ENCODE measurements at regions of chr19 and their contacts with region 1.

Region 1: GRCh38 chr19:13099073-13099999 is 3.3 kb downstream of the LYL1 start:
- DNase-seq: no peak
- H3K4me3 ChIP-seq: no peak overlapping the region
- H3K27ac ChIP-seq: no peak overlapping the region
- H3K4me1 ChIP-seq: no peaks in the 10 kb centered on the region
- H3K27me3 ChIP-seq: no peaks in the 10 kb centered on the region
- CTCF ChIP-seq: no peak

Region 2: DNA sequence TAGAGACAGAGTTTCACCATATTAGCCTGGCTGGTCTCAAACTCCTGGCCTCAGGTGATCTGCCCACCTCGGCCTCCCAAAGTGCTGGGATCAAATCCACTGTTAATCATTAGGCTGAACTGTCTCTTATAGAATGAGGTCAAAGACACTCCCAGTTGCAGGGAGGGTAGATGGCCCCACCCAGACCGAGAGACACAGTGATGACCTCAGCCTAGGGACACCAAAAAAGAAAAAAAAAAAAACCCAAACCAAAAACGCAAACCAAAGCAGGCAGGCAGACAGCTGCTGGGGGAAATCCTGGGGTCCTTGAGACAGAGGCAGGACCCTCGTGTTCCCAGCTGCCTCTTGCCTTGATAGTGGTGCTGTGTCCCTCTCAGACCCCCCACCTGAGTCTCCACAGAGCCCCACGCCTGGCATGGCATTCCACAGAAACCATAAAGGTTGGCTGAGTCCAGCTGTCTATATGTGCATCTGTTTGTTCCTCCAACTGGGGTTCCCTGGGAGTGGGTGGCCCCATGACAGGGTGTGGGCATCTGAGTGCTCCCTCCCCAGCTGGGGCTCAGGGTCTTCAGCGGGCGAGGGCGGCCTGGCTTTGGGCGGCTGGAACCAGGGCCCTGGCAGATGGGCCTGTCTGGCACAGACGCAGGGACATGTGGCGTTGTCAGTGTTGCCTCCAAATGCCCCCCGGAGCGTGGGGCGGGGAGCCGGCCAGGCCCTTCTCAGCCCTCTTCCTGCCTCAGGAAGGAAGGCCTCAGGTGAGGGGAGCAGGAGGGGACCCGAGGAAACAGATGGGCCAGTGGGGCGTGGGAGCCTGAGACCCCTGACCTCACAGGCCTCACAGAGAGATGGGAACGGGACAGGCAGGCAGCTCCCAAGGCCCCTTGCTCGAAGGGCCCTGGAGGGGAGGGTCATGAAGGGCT is 124.8 kb before region 1 on chr19:
- CTCF ChIA-PET with region 1: interaction called, 9 read pairs
- dilution Hi-C with region 1: no loop called
- in situ Hi-C with region 1: loop called (anchors 5 to 10 kb)
- intact Hi-C with region 1: no loop called
- DNase-seq: no peak
- H3K4me3 ChIP-seq: no peak overlapping the region
- H3K27ac ChIP-seq: no peak overlapping the region
- H3K4me1 ChIP-seq: no peaks in the 10 kb centered on the region
- H3K27me3 ChIP-seq: peaks cover 3% of the 10 kb centered on the region
- CTCF ChIP-seq: no peak

Region 3: GRCh38 chr19:12994701-12995595 is 104.4 kb before region 1 on chr19 and contains the start of gene NFIX:
- CTCF ChIA-PET with region 1: no interaction called
- dilution Hi-C with region 1: no loop called
- in situ Hi-C with region 1: no loop called
- intact Hi-C with region 1: no loop called
- DNase-seq: peak; percentile 62
- H3K4me3 ChIP-seq: peak within 1 kb of the TSS; percentile 55 to 97 (median 91)
- H3K27ac ChIP-seq: peak within 1 kb of the TSS; percentile 47
- H3K4me1 ChIP-seq: peaks cover 19% of the 10 kb centered on the region
- H3K27me3 ChIP-seq: no peaks in the 10 kb centered on the region
- CTCF ChIP-seq: no peak
- total RNA-seq, gene NFIX: 43.2 to 76.1 TPM

Measured in mammary epithelial cell (primary cell).